Spleen (tissue), 13 donors: ENCODE measurements at regions of chr5 and their contacts with region 1.

Region 1: GRCh38 chr5:157431544-157432200 is 28.3 kb upstream of the NIPAL4 start:
- DNase-seq: no peak
- H3K4me3 ChIP-seq: no peak overlapping the region
- H3K27ac ChIP-seq: peak overlapping the region in 1 of 8 donors; percentile 26
- H3K4me1 ChIP-seq: peaks cover 0 to 10% (median 5%) of the 10 kb centered on the region in 6 donors
- H3K27me3 ChIP-seq: no peaks in the 10 kb centered on the region
- CTCF ChIP-seq: peak in 10 of 11 experiments; percentile 21 to 75 (median 51)
- POLR2A ChIP-seq: no peak

Region 2: DNA sequence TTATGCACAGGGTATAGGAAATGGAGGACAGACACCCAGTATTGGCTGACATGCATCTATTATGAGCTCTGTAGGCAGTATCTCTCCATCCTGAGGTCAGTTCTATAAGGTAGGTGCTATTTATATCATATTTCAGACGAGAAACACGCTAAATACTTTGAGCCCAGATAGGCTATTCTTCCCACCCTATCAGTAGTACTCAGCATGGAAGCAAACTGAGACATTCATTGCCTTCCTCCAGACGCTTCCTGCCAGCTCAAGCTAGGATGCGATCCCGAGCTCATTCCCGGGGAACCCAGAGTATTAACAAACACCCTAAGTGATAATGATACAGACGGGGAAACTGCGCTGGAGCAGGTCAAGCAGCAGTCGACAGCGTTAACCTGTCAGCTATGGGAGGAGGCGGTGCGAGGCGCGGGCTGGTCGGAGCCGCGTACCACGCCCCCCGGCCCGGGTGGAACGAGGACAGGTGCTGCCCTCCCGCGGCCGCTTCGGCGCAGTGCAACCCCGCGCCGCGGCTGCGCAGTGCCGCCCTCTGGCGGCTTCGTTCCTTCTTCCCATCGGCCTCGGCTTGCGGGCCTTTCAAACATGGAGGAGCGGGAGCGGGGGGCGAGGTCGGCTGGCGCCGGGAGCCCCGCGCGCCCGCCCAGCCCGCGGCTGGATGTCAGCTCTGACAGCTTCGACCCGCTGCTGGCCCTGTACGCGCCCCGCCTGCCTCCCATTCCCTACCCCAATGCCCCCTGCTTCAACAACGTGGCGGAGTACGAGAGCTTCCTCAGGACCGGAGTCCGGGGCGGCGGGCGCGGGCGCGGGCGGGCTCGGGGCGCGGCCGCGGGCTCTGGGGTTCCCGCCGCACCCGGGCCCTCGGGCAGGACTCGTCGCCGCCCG is 311.7 kb after region 1 on chr5 and contains the start of gene LSM11:
- intact Hi-C with region 1: loop called (anchors 5 kb)
- DNase-seq: peak; percentile 99
- H3K4me3 ChIP-seq: peak within 1 kb of the TSS; percentile 51 to 88 (median 72)
- H3K27ac ChIP-seq: peak within 1 kb of the TSS in 7 of 8 donors; percentile 51 to 85 (median 70)
- H3K4me1 ChIP-seq: peaks cover 3 to 26% (median 19%) of the 10 kb centered on the region in 6 donors
- H3K27me3 ChIP-seq: no peaks in the 10 kb centered on the region
- CTCF ChIP-seq: peak; percentile 97 to 100 (median 100)
- POLR2A ChIP-seq: no peak
- total RNA-seq, gene LSM11: 3.0 to 4.6 (median 3.5) TPM